Head of caudate nucleus (tissue), 42 donors: ENCODE measurements at regions of chr9 and their contacts with region 1.

Region 1: GRCh38 chr9:17810728-17811571 is 232.1 kb downstream of the SH3GL2 start:
- DNase-seq: peak in 41 of 42 donors; percentile 6 to 88 (median 67)

Region 2: DNA sequence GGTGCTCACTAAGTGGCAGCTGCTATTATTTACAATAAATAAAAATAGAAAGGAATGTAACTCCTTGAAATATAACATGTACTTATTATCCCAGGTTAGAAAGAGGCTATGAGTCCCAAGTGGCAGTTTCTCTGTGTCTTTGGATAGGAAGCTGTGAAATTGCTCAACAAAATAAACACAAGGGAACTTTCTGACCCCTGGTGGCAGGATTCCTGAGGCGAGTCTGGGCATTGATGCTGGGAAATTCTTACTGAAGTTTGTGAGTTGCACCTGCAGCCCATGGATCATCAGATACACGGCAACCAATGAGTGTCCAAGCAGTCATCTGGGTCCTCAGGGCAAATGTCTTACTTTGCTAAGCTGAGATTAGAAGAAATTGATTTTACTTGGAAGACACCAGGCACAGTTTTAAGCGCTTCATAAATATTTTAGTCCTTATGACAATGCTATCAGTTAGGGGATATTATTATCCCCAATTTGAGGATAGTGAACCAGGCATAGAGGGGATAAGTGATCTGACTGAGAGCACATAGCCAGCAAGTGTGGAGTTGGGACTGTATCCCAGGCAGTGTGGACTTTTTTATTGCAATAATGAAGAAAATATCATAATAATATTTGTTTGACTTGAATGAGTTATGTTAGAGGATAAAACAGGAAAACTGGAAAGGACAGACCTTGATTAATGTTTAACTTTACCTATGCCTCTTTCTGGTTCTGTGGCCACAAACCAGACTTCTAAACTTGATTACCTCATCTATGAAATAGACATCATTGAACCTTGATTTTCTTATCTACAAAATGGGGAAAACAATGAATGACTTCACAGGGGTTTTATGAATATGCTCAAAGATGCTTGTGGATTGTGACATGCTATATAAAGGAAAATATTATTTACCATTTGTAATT is 397.5 kb after region 1 on chr9:
- intact Hi-C with region 1: loop called (anchors 5 kb)
- DNase-seq: peak in 24 of 42 donors; percentile 3 to 48 (median 22)